Caco-2 (cell line): ENCODE measurements at regions of chr18 and their contacts with region 1.

Region 1: GRCh38 chr18:22563098-22563707 is 145.5 kb upstream of the CTAGE1 start:
- DNase-seq: peak; percentile 68 to 75
- H3K4me3 ChIP-seq: no peak overlapping the region
- H3K4me3 Mint-ChIP-seq: no peak overlapping the region
- H3K27ac Mint-ChIP-seq: no peak overlapping the region
- H3K4me1 ChIP-seq: peaks cover 3% of the 10 kb centered on the region; the same call in 1 of the 2 replicates
- H3K4me1 Mint-ChIP-seq: peaks cover 9% of the 10 kb centered on the region
- H3K27me3 ChIP-seq: no peaks in the 10 kb centered on the region
- H3K27me3 Mint-ChIP-seq: no peaks in the 10 kb centered on the region
- CTCF ChIP-seq: peak; percentile 68 to 70

Region 2: DNA sequence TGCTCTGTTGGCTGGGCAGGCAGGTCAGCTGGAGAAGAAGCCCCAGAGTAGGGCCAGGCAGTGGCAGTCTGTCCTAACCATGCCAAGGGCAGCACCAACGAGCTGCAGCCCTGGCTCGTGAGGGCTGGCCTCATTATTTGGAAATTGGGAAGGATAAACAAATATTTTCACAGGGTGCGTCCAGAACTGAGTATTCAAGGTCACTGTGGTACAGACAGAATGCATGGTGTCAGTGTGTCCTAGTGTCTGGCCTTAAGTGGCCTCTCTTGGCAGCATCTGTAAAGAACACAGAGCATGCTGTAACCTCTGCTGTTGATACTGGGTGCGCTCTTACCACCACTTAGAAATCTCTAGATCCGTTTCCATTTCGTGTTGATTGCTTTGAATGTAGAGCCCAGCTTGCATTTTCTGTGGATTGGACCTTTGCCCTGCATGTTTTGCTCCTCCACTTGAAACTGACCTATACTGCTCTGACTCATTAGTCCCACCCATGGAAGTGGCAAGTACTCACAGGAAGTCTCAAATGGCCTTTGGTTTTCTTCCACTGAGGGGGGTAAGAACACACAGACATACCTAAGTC is 1233.0 kb before region 1 on chr18:
- CTCF ChIA-PET with region 1: no interaction called
- POLR2A ChIA-PET with region 1: no interaction called
- intact Hi-C with region 1: no loop called
- DNase-seq: peak; percentile 45 to 63
- H3K4me3 ChIP-seq: no peak overlapping the region
- H3K4me3 Mint-ChIP-seq: peak overlapping the region; percentile 53
- H3K27ac Mint-ChIP-seq: peak overlapping the region; percentile 69
- H3K4me1 ChIP-seq: peaks cover 46% of the 10 kb centered on the region
- H3K4me1 Mint-ChIP-seq: peaks cover 42% of the 10 kb centered on the region
- H3K27me3 ChIP-seq: no peaks in the 10 kb centered on the region
- H3K27me3 Mint-ChIP-seq: no peaks in the 10 kb centered on the region
- CTCF ChIP-seq: no peak

Region 3: DNA sequence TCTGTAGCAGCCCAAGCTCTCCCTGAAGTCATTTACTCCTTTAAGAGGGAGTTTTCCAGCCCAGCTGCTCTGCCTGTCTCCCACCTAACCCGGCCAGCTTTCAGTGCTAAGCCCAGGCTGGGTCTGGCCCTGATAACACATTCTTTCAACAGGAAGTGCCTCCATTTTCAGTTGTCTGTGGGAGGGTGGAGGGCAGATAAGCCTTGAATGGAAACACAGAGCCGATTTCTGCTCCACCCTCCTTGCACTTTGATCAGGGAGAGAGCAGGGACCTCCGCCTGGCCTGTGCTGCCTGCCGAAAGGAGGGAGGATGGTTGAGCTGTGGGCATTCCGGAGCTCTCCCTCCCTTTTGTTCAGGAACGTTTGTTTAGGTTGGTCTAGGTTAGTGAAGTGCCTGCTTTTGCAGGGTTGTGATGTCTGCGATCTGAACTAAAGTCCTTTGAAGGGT is 369.0 kb before region 1 on chr18:
- CTCF ChIA-PET with region 1: interaction called, 4 read pairs
- POLR2A ChIA-PET with region 1: no interaction called
- intact Hi-C with region 1: loop called (anchors 5 kb)
- DNase-seq: peak; percentile 90 to 91
- H3K4me3 ChIP-seq: no peak overlapping the region
- H3K4me3 Mint-ChIP-seq: peak overlapping the region; percentile 62
- H3K27ac Mint-ChIP-seq: peak overlapping the region; percentile 86
- H3K4me1 ChIP-seq: peaks cover 70% of the 10 kb centered on the region
- H3K4me1 Mint-ChIP-seq: peaks cover 67% of the 10 kb centered on the region
- H3K27me3 ChIP-seq: no peaks in the 10 kb centered on the region
- H3K27me3 Mint-ChIP-seq: no peaks in the 10 kb centered on the region
- CTCF ChIP-seq: no peak

Region 4: DNA sequence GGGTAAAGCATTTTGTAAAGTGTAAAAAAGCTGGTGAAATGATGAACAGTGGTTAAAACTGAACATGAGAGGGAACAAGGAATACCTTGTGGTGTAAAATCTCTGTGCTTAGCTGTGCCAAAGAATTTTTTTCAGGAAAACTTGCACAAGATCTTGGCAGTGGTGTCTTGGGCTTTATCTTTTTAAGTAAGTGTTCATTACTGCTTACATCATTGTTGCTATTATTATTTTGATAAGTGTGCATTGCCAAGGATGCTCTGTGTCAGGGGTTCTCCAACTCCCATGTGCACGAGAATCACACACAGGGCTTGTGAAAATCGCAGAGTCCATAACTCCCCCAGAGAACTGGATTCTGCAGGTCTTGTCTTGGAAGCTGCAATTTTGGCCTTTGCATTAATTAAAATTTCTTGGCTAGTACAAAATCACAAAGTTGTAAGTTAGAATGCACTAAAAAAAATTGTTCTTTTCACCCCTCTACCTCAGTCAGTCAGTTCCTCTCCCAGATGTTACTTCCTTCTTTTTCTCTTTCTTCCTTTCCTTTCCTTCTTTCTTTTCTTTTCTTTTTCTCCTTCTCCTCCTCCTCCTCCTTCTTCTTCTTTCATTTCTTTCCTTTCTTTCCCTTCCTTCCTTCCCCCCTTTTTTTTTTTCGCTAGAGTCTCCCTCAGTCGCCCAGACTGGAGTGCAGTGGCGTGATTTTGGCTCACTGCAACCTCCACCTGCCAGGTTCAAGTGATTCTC is 356.0 kb before region 1 on chr18:
- CTCF ChIA-PET with region 1: interaction called, 4 read pairs
- POLR2A ChIA-PET with region 1: no interaction called
- intact Hi-C with region 1: loop called (anchors 5 kb)
- DNase-seq: no peak
- H3K4me3 ChIP-seq: no peak overlapping the region
- H3K4me3 Mint-ChIP-seq: no peak overlapping the region
- H3K27ac Mint-ChIP-seq: peak overlapping the region; percentile 17
- H3K4me1 ChIP-seq: peaks cover 18% of the 10 kb centered on the region; the same call in 1 of the 2 replicates
- H3K4me1 Mint-ChIP-seq: peaks cover 51% of the 10 kb centered on the region
- H3K27me3 ChIP-seq: no peaks in the 10 kb centered on the region
- H3K27me3 Mint-ChIP-seq: no peaks in the 10 kb centered on the region
- CTCF ChIP-seq: no peak

Region 5: GRCh38 chr18:22378672-22379282 is 184.4 kb before region 1 on chr18:
- CTCF ChIA-PET with region 1: interaction called, 12 read pairs
- POLR2A ChIA-PET with region 1: no interaction called
- intact Hi-C with region 1: no loop called
- DNase-seq: peak; percentile 46 to 53
- H3K4me3 ChIP-seq: no peak overlapping the region
- H3K4me3 Mint-ChIP-seq: no peak overlapping the region
- H3K27ac Mint-ChIP-seq: no peak overlapping the region
- H3K4me1 ChIP-seq: no peaks in the 10 kb centered on the region
- H3K4me1 Mint-ChIP-seq: no peaks in the 10 kb centered on the region
- H3K27me3 ChIP-seq: no peaks in the 10 kb centered on the region
- H3K27me3 Mint-ChIP-seq: peaks cover 9% of the 10 kb centered on the region
- CTCF ChIP-seq: peak; percentile 61 to 67

Region 6: GRCh38 chr18:22399949-22400348 is 163.3 kb before region 1 on chr18:
- CTCF ChIA-PET with region 1: no interaction called
- POLR2A ChIA-PET with region 1: no interaction called
- intact Hi-C with region 1: loop called (anchors 1 kb)
- DNase-seq: no peak
- H3K4me3 ChIP-seq: no peak overlapping the region
- H3K4me3 Mint-ChIP-seq: no peak overlapping the region
- H3K27ac Mint-ChIP-seq: no peak overlapping the region
- H3K4me1 ChIP-seq: no peaks in the 10 kb centered on the region
- H3K4me1 Mint-ChIP-seq: no peaks in the 10 kb centered on the region
- H3K27me3 ChIP-seq: no peaks in the 10 kb centered on the region
- H3K27me3 Mint-ChIP-seq: no peaks in the 10 kb centered on the region
- CTCF ChIP-seq: no peak

Region 7: GRCh38 chr18:22465859-22466457 is 97.2 kb before region 1 on chr18:
- CTCF ChIA-PET with region 1: interaction called, 15 read pairs
- POLR2A ChIA-PET with region 1: no interaction called
- intact Hi-C with region 1: loop called (anchors 1 kb)
- DNase-seq: peak; percentile 80 to 84
- H3K4me3 ChIP-seq: no peak overlapping the region
- H3K4me3 Mint-ChIP-seq: peak overlapping the region; percentile 64
- H3K27ac Mint-ChIP-seq: peak overlapping the region; percentile 99
- H3K4me1 ChIP-seq: peaks cover 62% of the 10 kb centered on the region
- H3K4me1 Mint-ChIP-seq: peaks cover 50% of the 10 kb centered on the region
- H3K27me3 ChIP-seq: no peaks in the 10 kb centered on the region
- H3K27me3 Mint-ChIP-seq: no peaks in the 10 kb centered on the region
- CTCF ChIP-seq: no peak

Region 8: DNA sequence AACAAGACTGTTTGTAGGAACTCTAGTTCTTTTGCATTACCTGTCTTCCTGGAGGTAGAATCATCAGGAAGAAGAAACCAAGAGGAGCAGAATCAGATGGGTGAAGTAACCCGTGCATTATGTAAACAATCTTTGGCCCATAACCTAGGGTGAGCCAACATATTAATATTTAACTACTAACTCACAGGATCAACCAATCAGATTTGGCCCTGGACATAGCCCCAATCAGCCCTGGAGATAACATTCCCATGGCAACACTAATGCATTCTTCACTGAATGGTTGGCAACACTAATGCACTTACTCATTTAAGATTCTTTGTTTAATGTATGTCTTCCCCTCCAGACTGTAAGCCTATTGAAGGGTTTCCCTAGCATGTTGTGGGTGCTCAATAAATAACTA is 73.5 kb before region 1 on chr18:
- CTCF ChIA-PET with region 1: interaction called, 8 read pairs
- POLR2A ChIA-PET with region 1: no interaction called
- intact Hi-C with region 1: loop called (anchors 1 kb)
- DNase-seq: peak; percentile 77 to 80
- H3K4me3 ChIP-seq: no peak overlapping the region
- H3K4me3 Mint-ChIP-seq: no peak overlapping the region
- H3K27ac Mint-ChIP-seq: peak overlapping the region; percentile 81
- H3K4me1 ChIP-seq: peaks cover 47% of the 10 kb centered on the region
- H3K4me1 Mint-ChIP-seq: peaks cover 57% of the 10 kb centered on the region
- H3K27me3 ChIP-seq: no peaks in the 10 kb centered on the region
- H3K27me3 Mint-ChIP-seq: no peaks in the 10 kb centered on the region
- CTCF ChIP-seq: no peak

Region 9: GRCh38 chr18:23049698-23050373 is 486.6 kb after region 1 on chr18:
- CTCF ChIA-PET with region 1: no interaction called
- POLR2A ChIA-PET with region 1: no interaction called
- intact Hi-C with region 1: no loop called
- DNase-seq: no peak
- H3K4me3 ChIP-seq: no peak overlapping the region
- H3K4me3 Mint-ChIP-seq: no peak overlapping the region
- H3K27ac Mint-ChIP-seq: no peak overlapping the region
- H3K4me1 ChIP-seq: no peaks in the 10 kb centered on the region
- H3K4me1 Mint-ChIP-seq: no peaks in the 10 kb centered on the region
- H3K27me3 ChIP-seq: no peaks in the 10 kb centered on the region
- H3K27me3 Mint-ChIP-seq: no peaks in the 10 kb centered on the region
- CTCF ChIP-seq: no peak